Activated CD8-positive, alpha-beta memory T cell treated with anti-CD3 and anti-CD28 coated beads, Interleukin-2, amount 10 ng/mL, durations not matched to agents 7 days and 5 days (primary cell): ENCODE measurements at regions of chr5 and their contacts with region 1.

Region 1: DNA sequence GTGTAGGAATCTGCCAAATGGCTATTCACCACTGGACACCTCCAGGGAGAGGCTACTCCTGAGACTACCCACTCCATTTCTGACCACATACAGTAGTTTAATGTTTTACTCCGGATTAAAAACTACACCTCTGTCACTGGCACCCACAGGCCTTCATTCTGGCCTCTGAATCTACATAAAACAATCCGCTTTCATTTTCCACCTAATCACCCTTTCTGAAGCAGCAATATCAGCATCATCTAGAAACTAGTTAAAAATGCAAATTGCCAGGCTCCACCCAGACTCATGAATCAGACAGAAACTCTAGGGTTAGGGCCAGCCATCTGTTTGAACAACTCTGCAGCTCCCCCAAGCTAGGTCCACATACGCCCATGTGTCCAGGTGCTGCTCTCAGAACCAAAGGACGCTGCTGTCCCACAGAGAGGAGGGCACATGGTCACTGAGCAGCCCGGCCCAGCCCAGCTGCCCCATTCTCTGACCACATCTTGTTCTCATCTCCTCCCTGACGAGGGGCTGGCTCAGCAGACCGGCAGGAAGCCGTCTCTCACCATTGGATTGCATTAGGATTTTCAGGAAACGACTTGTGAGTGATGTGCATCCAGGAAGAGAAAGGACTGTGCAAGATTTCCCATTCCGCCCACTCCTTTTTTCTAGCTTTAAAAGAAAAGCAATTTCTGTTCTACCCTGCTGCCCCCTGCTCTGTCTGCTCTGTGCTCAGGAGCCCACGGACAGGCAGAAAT is 34.7 kb downstream of the ADAM19 start:
- DNase-seq: peak; percentile 80
- ATAC-seq: peak; percentile 80
- H3K4me3 Mint-ChIP-seq: peak overlapping the region; percentile 68
- H3K27ac Mint-ChIP-seq: peak overlapping the region; percentile 95
- H3K4me1 Mint-ChIP-seq: peaks cover 93% of the 10 kb centered on the region
- H3K27me3 Mint-ChIP-seq: no peaks in the 10 kb centered on the region

Region 2: DNA sequence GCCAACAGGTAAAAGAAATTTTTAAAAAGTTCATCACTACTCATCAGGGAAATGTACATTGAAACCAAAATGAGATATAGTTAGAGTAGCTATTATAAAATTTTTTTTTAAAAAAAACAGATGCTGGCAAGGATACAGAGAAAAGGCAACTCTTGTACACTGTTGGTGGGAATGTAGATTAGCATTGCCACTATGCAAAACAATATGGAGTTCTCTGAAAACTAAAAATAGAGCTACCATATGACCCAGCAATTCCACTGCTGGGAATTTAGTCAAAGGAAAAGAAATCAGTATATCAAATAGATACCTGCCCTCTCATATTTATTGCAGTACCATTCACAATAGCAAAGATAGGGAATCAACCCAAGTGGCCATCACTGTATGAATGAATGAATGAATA is 125.0 kb before region 1 on chr5:
- CTCF ChIA-PET with region 1: no interaction called
- DNase-seq: no peak
- ATAC-seq: no peak
- H3K4me3 Mint-ChIP-seq: no peak overlapping the region
- H3K27ac Mint-ChIP-seq: no peak overlapping the region
- H3K4me1 Mint-ChIP-seq: no peaks in the 10 kb centered on the region
- H3K27me3 Mint-ChIP-seq: peaks cover 45% of the 10 kb centered on the region

Region 3: GRCh38 chr5:157607371-157608161 is 66.7 kb after region 1 on chr5:
- CTCF ChIA-PET with region 1: interaction called, 12 read pairs
- DNase-seq: peak; percentile 92
- ATAC-seq: peak; percentile 78
- H3K4me3 Mint-ChIP-seq: peak overlapping the region; percentile 39
- H3K27ac Mint-ChIP-seq: peak overlapping the region; percentile 89
- H3K4me1 Mint-ChIP-seq: peaks cover 81% of the 10 kb centered on the region
- H3K27me3 Mint-ChIP-seq: no peaks in the 10 kb centered on the region